ENCODE measurements at regions of chr11 and their contacts with region 1.

Region 1: DNA sequence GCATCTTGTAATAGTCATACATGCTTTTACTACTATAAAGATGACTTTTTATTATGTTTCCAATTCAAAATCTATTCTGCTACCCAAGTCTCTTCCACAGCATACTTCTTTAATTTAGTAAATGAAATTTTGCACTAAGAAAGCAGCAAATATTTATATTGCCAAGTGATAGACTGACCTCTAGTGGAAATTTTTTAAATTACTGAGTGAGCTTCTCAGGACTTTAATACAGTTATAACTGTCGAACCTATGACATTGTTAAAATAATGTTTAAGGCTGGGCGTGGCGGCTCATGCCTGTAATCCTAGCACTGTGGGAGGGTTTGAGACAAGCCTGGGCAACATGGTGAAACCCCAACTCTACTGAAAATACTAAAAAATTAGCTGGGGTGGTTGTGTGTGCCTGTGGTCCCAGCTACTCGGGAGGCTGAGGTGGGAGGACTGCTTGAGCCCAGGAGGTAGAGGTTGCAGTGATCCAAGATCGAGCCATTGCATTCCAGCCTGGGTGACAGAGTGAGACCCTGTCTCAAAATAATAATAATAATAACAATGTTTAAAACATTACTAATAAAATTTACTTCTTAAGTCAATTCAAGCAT is 27.3 kb downstream of the STK33 start:
- DNase-seq: no peak
- ATAC-seq: peak in 2 of 4 donors; percentile 22 to 29
- H3K4me3 ChIP-seq: no peak overlapping the region
- H3K27ac ChIP-seq: no peak overlapping the region
- H3K4me1 ChIP-seq: no peaks in the 10 kb centered on the region
- H3K27me3 ChIP-seq: peaks cover 0 to 5% (median 0%) of the 10 kb centered on the region in 9 donors
- CTCF ChIP-seq: peak; percentile 52 to 86 (median 71)
- POLR2A ChIP-seq: no peak

Region 2: GRCh38 chr11:8192016-8192895 is 374.5 kb before region 1 on chr11:
- intact Hi-C with region 1: loop called in 3 of 10 experiments (anchors 1 to 10 kb)
- DNase-seq: peak in 4 of 5 donors; percentile 59 to 69 (median 60)
- ATAC-seq: peak; percentile 70 to 85 (median 80)
- H3K4me3 ChIP-seq: no peak overlapping the region
- H3K27ac ChIP-seq: no peak overlapping the region
- H3K4me1 ChIP-seq: peaks cover 0 to 8% (median 0%) of the 10 kb centered on the region in 12 donors
- H3K27me3 ChIP-seq: peaks cover 0 to 11% (median 0%) of the 10 kb centered on the region in 9 donors
- CTCF ChIP-seq: peak; percentile 64 to 91 (median 82)
- POLR2A ChIP-seq: no peak

Region 3: GRCh38 chr11:8219257-8220021 is 347.3 kb before region 1 on chr11:
- intact Hi-C with region 1: loop called in 5 of 10 experiments (anchors 2 to 5 kb)
- DNase-seq: peak in 2 of 5 donors; percentile 46 to 47
- ATAC-seq: peak in 3 of 4 donors; percentile 48 to 79 (median 62)
- H3K4me3 ChIP-seq: no peak overlapping the region
- H3K27ac ChIP-seq: no peak overlapping the region
- H3K4me1 ChIP-seq: no peaks in the 10 kb centered on the region
- H3K27me3 ChIP-seq: peaks cover 0 to 4% (median 0%) of the 10 kb centered on the region in 9 donors
- CTCF ChIP-seq: peak; percentile 35 to 64 (median 50)
- POLR2A ChIP-seq: no peak

Region 4: GRCh38 chr11:8328848-8329330 is 237.8 kb before region 1 on chr11:
- intact Hi-C with region 1: loop called in 5 of 10 experiments (anchors 5 to 10 kb)
- DNase-seq: peak; percentile 64 to 88 (median 80)
- ATAC-seq: peak; percentile 78 to 91 (median 84)
- H3K4me3 ChIP-seq: peak overlapping the region in 10 of 12 donors; percentile 5 to 47 (median 35)
- H3K27ac ChIP-seq: peak overlapping the region in 1 of 12 donors; percentile 48
- H3K4me1 ChIP-seq: peaks cover 0 to 20% (median 6%) of the 10 kb centered on the region in 12 donors
- H3K27me3 ChIP-seq: peaks cover 0 to 11% (median 0%) of the 10 kb centered on the region in 9 donors
- CTCF ChIP-seq: peak; percentile 53 to 81 (median 65)
- POLR2A ChIP-seq: no peak

Region 5: GRCh38 chr11:8338138-8338537 is 228.6 kb before region 1 on chr11:
- intact Hi-C with region 1: loop called in 9 of 10 experiments (anchors 5 to 10 kb)
- DNase-seq: peak in 4 of 5 donors; percentile 34 to 70 (median 50)
- ATAC-seq: peak in 3 of 4 donors; percentile 50 to 77 (median 61)
- H3K4me3 ChIP-seq: no peak overlapping the region
- H3K27ac ChIP-seq: no peak overlapping the region
- H3K4me1 ChIP-seq: no peaks in the 10 kb centered on the region
- H3K27me3 ChIP-seq: no peaks in the 10 kb centered on the region
- CTCF ChIP-seq: peak; percentile 46 to 73 (median 61)
- POLR2A ChIP-seq: no peak

Region 6: DNA sequence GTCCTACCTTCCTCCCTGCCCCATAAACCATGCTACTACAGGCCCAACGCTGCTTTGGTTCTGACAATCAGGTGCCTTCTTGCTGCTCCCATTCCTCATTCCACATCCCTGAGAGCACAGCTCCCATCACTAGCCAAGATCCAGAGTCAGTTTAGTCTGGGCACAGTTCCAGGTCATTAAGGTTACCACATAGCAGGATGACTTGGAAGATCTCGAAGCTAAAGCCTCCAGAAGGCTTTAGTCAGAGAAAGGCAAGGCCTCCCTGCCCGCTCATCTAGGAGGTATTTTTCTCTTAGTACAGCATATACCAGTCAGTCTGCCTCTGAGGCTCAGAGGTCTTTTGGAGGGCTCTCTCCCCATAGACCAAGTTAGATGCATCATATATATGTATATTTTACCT is 85.4 kb after region 1 on chr11:
- intact Hi-C with region 1: no loop called
- DNase-seq: no peak
- ATAC-seq: peak in 2 of 4 donors; percentile 24 to 45
- H3K4me3 ChIP-seq: no peak overlapping the region
- H3K27ac ChIP-seq: no peak overlapping the region
- H3K4me1 ChIP-seq: no peaks in the 10 kb centered on the region
- H3K27me3 ChIP-seq: no peaks in the 10 kb centered on the region
- CTCF ChIP-seq: no peak
- POLR2A ChIP-seq: no peak

Region 7: DNA sequence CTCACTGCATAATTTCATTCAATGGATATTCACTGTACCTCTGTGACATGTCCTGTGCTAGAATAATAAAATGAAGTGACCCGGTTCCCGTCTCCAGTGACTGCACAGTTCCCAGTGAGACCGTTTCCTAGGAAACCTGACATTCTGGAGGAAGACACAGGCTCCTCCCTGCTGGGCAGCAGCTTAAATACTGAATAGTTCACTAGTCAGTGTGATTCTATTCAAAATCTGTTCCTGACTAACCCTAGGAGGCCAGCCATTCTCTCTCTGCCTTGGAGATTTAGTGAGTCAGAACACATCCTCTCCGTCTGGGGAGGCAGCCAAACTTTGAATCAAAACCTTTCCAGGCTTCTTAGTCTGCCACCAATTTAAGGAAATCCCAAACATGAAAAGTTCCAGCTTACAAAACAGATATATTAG is 104.5 kb after region 1 on chr11:
- intact Hi-C with region 1: no loop called
- DNase-seq: peak in 4 of 5 donors; percentile 67 to 78 (median 74)
- ATAC-seq: peak; percentile 87 to 98 (median 98)
- H3K4me3 ChIP-seq: no peak overlapping the region
- H3K27ac ChIP-seq: peak overlapping the region; percentile 43 to 87 (median 78)
- H3K4me1 ChIP-seq: peaks cover 0 to 24% (median 13%) of the 10 kb centered on the region in 12 donors
- H3K27me3 ChIP-seq: no peaks in the 10 kb centered on the region
- CTCF ChIP-seq: no peak
- POLR2A ChIP-seq: no peak

Region 8: GRCh38 chr11:8832571-8833260 is 266.0 kb after region 1 on chr11:
- intact Hi-C with region 1: no loop called
- DNase-seq: no peak
- ATAC-seq: peak in 3 of 4 donors; percentile 77 to 83 (median 83)
- H3K4me3 ChIP-seq: no peak overlapping the region
- H3K27ac ChIP-seq: peak overlapping the region in 10 of 12 donors; percentile 3 to 75 (median 56)
- H3K4me1 ChIP-seq: peaks cover 0 to 33% (median 20%) of the 10 kb centered on the region in 12 donors
- H3K27me3 ChIP-seq: no peaks in the 10 kb centered on the region
- CTCF ChIP-seq: no peak
- POLR2A ChIP-seq: no peak

Measured in heart left ventricle (tissue), 16 donors.